Activated T-helper 2 cell treated with anti-CD3 and anti-CD28 coated beads, Interferon-gamma antibody, Interleukin-2, Interleukin-4, amounts not matched to agents 10 μg/mL and 5 μg/mL and 100 μg/mL, durations not matched to agents 14 hours and 24 hours and 36 hours (primary cell): ENCODE measurements at regions of chr7 and their contacts with region 1.

Region 1: GRCh38 chr7:137934941-137935883 is 66.7 kb downstream of the CREB3L2 start:
- DNase-seq: no peak
- H3K4me3 Mint-ChIP-seq: peak overlapping the region; percentile 78
- H3K27ac Mint-ChIP-seq: peak overlapping the region; percentile 79
- H3K4me1 Mint-ChIP-seq: peaks cover 39% of the 10 kb centered on the region
- H3K27me3 Mint-ChIP-seq: no peaks in the 10 kb centered on the region

Region 2: GRCh38 chr7:137923380-137923779 is 11.8 kb before region 1 on chr7:
- intact Hi-C with region 1: loop called (anchors 2 kb)
- DNase-seq: no peak
- H3K4me3 Mint-ChIP-seq: no peak overlapping the region
- H3K27ac Mint-ChIP-seq: peak overlapping the region; percentile 10
- H3K4me1 Mint-ChIP-seq: peaks cover 33% of the 10 kb centered on the region
- H3K27me3 Mint-ChIP-seq: no peaks in the 10 kb centered on the region

Region 3: DNA sequence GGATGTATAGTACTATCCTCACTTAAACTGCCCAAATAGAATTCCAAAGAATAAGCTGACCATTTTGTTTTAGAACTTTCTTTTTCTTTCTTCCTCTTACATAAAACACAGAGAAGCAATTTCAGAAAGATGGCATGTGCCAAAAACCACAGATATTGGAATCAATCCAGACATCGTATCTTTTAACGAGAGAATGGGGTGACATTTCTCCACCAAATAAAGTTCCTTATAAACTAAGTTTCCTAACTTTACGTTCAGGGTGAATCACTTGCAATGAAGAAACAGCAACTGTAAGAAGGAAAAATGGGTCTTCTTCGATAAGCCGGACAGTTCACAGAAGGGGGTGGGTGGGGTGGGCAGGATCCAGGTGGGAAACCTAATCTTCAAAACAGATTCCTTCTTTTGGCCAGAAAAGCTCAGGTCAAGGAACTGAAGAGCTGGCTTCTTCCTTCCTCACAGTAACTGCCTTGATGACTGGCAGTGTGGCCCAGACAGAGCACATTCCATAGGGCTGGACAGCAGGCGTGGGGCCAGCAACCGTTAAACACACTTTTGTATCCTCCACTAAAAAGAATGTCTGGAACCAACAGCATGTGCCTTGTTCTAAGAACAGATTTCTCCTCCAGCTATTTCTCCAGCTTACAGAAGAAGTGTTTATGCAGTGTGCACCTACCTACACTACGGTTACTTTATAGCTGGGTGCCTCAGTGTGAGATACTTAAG is 35.2 kb after region 1 on chr7:
- intact Hi-C with region 1: no loop called
- DNase-seq: no peak
- H3K4me3 Mint-ChIP-seq: no peak overlapping the region
- H3K27ac Mint-ChIP-seq: no peak overlapping the region
- H3K4me1 Mint-ChIP-seq: peaks cover 17% of the 10 kb centered on the region
- H3K27me3 Mint-ChIP-seq: no peaks in the 10 kb centered on the region

Region 4: DNA sequence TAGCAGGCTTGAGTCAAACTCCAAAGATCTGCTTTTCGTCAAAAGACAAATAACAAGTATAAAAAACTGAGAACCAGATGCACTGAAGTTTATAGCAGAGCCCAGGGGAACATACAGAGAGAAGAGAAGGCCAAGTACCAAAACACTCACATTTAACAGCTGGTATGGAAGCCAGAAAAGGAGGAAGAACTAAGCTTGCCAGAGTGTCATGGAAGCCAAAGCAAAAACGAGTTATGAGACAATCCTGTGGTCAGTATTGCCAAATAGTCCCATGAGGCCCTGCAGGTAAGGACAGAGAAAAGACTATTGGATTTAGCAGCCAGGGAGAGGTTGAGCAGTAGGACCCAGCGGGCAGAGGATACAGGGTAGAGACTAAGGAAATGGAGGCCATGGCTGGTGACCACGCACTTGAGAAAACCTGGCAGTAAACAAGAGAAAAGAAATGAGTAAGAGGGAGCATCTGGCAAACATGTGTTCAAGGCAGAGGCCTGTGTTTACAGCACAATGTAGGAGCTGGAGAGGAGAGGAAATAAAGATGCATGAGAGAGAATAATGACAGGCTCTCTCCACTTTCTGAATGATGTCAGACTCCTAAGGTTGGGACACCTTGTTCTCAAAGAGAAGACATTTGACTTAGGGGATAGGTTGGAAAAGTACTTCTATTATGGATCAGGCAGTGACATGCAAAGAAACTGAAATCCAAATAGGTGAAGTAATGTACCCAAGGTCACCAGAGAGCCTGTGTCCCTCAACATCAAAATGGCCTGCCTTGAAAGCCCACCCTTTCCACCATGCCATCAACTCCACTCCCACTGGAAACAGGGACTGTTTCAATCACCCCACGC is 57.6 kb after region 1 on chr7:
- intact Hi-C with region 1: loop called (anchors 5 kb)
- DNase-seq: no peak
- H3K4me3 Mint-ChIP-seq: no peak overlapping the region
- H3K27ac Mint-ChIP-seq: peak overlapping the region; percentile 23
- H3K4me1 Mint-ChIP-seq: peaks cover 34% of the 10 kb centered on the region
- H3K27me3 Mint-ChIP-seq: no peaks in the 10 kb centered on the region

Region 5: GRCh38 chr7:138021889-138022288 is 86.7 kb after region 1 on chr7:
- intact Hi-C with region 1: no loop called
- DNase-seq: no peak
- H3K4me3 Mint-ChIP-seq: no peak overlapping the region
- H3K27ac Mint-ChIP-seq: no peak overlapping the region
- H3K4me1 Mint-ChIP-seq: peaks cover 3% of the 10 kb centered on the region
- H3K27me3 Mint-ChIP-seq: no peaks in the 10 kb centered on the region